H1 (cell line): ENCODE measurements at regions of chr1 and their contacts with region 1.

Region 1: GRCh38 chr1:53294567-53294966 is 33.3 kb downstream of the LRP8 start:
- DNase-seq: no peak
- H3K4me3 ChIP-seq: no peak overlapping the region
- H3K27ac ChIP-seq: no peak overlapping the region
- H3K4me1 ChIP-seq: peaks cover 0 to 5% (median under 1%) of the 10 kb centered on the region in 4 experiments; a peak in 1 of 7 replicates
- H3K27me3 ChIP-seq: no peaks in the 10 kb centered on the region
- CTCF ChIP-seq: no peak
- EP300 ChIP-seq: no peak
- POLR2A ChIP-seq: no peak
- RAD21 ChIP-seq: no peak

Region 2: DNA sequence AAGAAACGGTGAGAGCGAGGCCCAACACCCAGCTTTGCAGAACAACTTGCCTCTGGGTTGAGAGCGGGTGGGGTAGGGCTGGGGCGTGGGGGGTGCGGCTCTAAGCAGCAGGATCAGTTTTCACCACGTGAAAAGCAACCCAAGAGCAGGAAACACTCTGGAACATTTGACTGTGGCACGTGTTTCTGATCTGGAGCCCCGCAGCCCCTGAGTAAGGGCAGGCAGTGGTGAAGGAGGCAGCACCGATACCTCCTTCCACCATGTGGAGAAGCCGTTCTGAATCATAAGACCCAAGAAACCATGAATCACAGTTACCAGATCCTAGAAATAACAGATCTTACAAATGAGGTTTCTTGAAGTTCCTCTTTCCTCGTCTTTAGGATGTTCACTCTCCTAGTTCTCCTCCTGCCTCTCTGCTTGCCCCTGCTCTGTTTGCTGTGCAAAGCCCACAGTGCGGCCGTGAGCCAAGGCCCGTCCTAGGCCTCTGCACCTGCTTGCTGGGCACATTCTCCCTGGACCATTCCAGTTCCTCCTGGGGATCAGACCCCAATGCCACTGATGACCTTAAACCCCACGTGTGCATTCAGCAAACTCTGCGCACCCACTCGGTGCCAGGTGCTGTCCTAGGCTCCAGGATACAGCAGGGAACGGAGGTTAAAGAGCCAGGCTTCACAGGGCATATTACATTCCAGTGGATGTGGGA is 184.0 kb before region 1 on chr1:
- CTCF ChIA-PET with region 1: no interaction called
- POLR2A ChIA-PET with region 1: no interaction called
- DNase-seq: no peak
- H3K4me3 ChIP-seq: no peak overlapping the region
- H3K27ac ChIP-seq: no peak overlapping the region
- H3K4me1 ChIP-seq: peaks cover 0 to 7% (median under 1%) of the 10 kb centered on the region in 4 experiments; a peak in 2 of 7 replicates
- H3K27me3 ChIP-seq: peaks cover 0 to 3% (median 0%) of the 10 kb centered on the region in 4 experiments; a peak in 1 of 7 replicates
- CTCF ChIP-seq: no peak
- EP300 ChIP-seq: no peak
- POLR2A ChIP-seq: no peak
- RAD21 ChIP-seq: no peak

Region 3: DNA sequence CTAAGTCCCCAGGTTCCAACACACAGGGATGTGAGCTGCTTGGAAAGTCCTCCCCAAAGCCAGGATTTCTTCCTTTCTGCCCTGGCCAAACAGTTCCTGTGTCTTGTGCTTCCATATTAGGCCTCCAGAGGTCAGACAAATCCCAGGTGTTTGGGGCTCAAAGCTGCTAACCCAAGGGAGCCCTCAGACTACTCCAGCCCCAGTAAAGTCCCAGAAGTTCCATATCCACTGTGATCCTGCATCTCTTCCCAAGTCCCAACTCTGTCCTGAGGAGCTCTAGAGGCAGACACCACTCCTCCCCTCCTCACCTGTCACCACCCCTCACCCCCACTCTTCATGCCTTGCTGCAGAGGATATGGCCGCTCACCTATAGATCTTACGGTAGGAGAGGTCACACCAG is 28.5 kb before region 1 on chr1:
- CTCF ChIA-PET with region 1: interaction called, 10 read pairs
- POLR2A ChIA-PET with region 1: no interaction called
- DNase-seq: no peak
- H3K4me3 ChIP-seq: no peak overlapping the region
- H3K27ac ChIP-seq: no peak overlapping the region
- H3K4me1 ChIP-seq: no peaks in the 10 kb centered on the region
- H3K27me3 ChIP-seq: no peaks in the 10 kb centered on the region
- CTCF ChIP-seq: peak in 2 of 3 experiments; percentile 34 to 56; a peak in 1 of 4 replicates
- EP300 ChIP-seq: no peak
- POLR2A ChIP-seq: no peak
- RAD21 ChIP-seq: peak; percentile 50 to 68; a peak in 3 of 4 replicates

Region 4: GRCh38 chr1:53315456-53316423 is 21.2 kb after region 1 on chr1:
- CTCF ChIA-PET with region 1: interaction called, 12 read pairs
- POLR2A ChIA-PET with region 1: interaction called, 4 read pairs
- DNase-seq: no peak
- H3K4me3 ChIP-seq: no peak overlapping the region
- H3K27ac ChIP-seq: no peak overlapping the region
- H3K4me1 ChIP-seq: peaks cover 0 to 12% (median 4%) of the 10 kb centered on the region in 4 experiments; a peak in 4 of 7 replicates
- H3K27me3 ChIP-seq: no peaks in the 10 kb centered on the region
- CTCF ChIP-seq: peak; percentile 28 to 55 (median 52); a peak in 3 of 4 replicates
- EP300 ChIP-seq: no peak
- POLR2A ChIP-seq: no peak
- RAD21 ChIP-seq: peak in 1 of 2 experiments; percentile 19; a peak in 2 of 4 replicates

Region 5: GRCh38 chr1:53326088-53326597 is 31.6 kb after region 1 on chr1:
- CTCF ChIA-PET with region 1: interaction called, 10 read pairs
- POLR2A ChIA-PET with region 1: interaction called, 4 read pairs
- DNase-seq: peak; percentile 83 to 93
- H3K4me3 ChIP-seq: peak overlapping the region; percentile 74 to 85 (median 80)
- H3K27ac ChIP-seq: peak overlapping the region; percentile 78; the same call in 1 of the 2 replicates
- H3K4me1 ChIP-seq: peaks cover 4 to 15% (median 9%) of the 10 kb centered on the region in 4 experiments
- H3K27me3 ChIP-seq: no peaks in the 10 kb centered on the region
- CTCF ChIP-seq: no peak
- EP300 ChIP-seq: no peak
- POLR2A ChIP-seq: peak in 1 of 2 experiments; percentile 76; a peak in 2 of 3 replicates
- RAD21 ChIP-seq: no peak

Region 6: GRCh38 chr1:53344891-53345838 is 50.6 kb after region 1 on chr1:
- CTCF ChIA-PET with region 1: no interaction called
- POLR2A ChIA-PET with region 1: no interaction called
- DNase-seq: peak in 1 of 2 experiments; percentile 35
- H3K4me3 ChIP-seq: no peak overlapping the region
- H3K27ac ChIP-seq: no peak overlapping the region
- H3K4me1 ChIP-seq: peaks cover 0 to 4% (median 0%) of the 10 kb centered on the region in 4 experiments; a peak in 2 of 7 replicates
- H3K27me3 ChIP-seq: peaks cover 0 to 5% (median under 1%) of the 10 kb centered on the region in 4 experiments; a peak in 3 of 7 replicates
- CTCF ChIP-seq: no peak
- EP300 ChIP-seq: no peak
- POLR2A ChIP-seq: no peak
- RAD21 ChIP-seq: no peak

Region 7: DNA sequence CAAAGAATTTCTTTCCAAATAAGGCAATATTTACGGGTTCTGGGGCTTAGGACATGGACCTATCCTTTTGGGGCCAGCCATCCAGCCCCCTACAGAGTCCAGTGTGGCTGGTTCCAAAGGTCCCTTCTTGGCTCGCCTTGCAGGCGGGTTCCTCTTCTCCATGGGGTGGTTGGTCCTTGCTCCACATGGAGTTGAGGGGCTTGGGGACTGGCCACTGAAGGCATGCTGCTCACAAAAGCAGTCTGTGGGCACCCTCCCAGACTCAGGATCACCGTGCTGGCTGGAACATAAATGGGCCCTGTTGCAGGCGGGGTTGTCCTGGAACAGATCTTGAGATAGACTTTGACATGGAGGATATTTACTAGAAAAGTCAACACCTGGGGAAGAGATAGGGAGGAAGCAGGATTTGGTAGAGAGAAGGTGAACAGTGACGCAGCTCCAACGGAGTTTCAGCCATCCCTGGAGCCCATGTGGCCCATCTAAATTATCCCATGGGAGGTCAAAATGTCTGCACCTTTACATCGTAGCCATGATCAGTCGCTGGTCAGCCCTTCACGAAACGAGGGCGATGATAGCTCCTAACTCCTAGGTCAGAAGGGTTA is 72.4 kb after region 1 on chr1:
- CTCF ChIA-PET with region 1: no interaction called
- POLR2A ChIA-PET with region 1: no interaction called
- DNase-seq: peak in 1 of 2 experiments; percentile 33
- H3K4me3 ChIP-seq: no peak overlapping the region
- H3K27ac ChIP-seq: no peak overlapping the region
- H3K4me1 ChIP-seq: peaks cover 0 to 5% (median 0%) of the 10 kb centered on the region in 4 experiments; a peak in 1 of 7 replicates
- H3K27me3 ChIP-seq: no peaks in the 10 kb centered on the region; a peak in 3 of 7 replicates
- CTCF ChIP-seq: no peak
- EP300 ChIP-seq: no peak
- POLR2A ChIP-seq: no peak
- RAD21 ChIP-seq: no peak